ENCODE measurements at regions of chr14 and their contacts with region 1.

Region 1: GRCh38 chr14:68824517-68825347 is 31.9 kb upstream of the ZFP36L1 start:
- DNase-seq: peak in 3 of 9 experiments; percentile 43 to 55 (median 48)
- ATAC-seq: no peak
- H3K4me3 ChIP-seq: no peak overlapping the region
- H3K4me3 Mint-ChIP-seq: no peak overlapping the region
- H3K27ac ChIP-seq: no peak overlapping the region
- H3K27ac Mint-ChIP-seq: no peak overlapping the region
- H3K4me1 ChIP-seq: peaks cover 23% of the 10 kb centered on the region
- H3K4me1 Mint-ChIP-seq: peaks cover 33% of the 10 kb centered on the region
- H3K27me3 ChIP-seq: no peaks in the 10 kb centered on the region
- H3K27me3 Mint-ChIP-seq: no peaks in the 10 kb centered on the region
- CTCF ChIP-seq: peak; percentile 52

Region 2: GRCh38 chr14:67934008-67934481 is 890.7 kb before region 1 on chr14:
- CTCF ChIA-PET with region 1: interaction called, 40 read pairs
- POLR2A ChIA-PET with region 1: interaction called, 4 read pairs
- intact Hi-C with region 1: no loop called
- DNase-seq: peak in 2 of 9 experiments; percentile 48 to 67
- ATAC-seq: peak; percentile 57
- H3K4me3 ChIP-seq: no peak overlapping the region
- H3K4me3 Mint-ChIP-seq: no peak overlapping the region
- H3K27ac ChIP-seq: no peak overlapping the region
- H3K27ac Mint-ChIP-seq: no peak overlapping the region
- H3K4me1 ChIP-seq: peaks cover 5% of the 10 kb centered on the region
- H3K4me1 Mint-ChIP-seq: peaks cover 7% of the 10 kb centered on the region
- H3K27me3 ChIP-seq: no peaks in the 10 kb centered on the region
- H3K27me3 Mint-ChIP-seq: no peaks in the 10 kb centered on the region
- CTCF ChIP-seq: peak; percentile 63

Region 3: GRCh38 chr14:68577827-68578541 is 246.7 kb before region 1 on chr14:
- CTCF ChIA-PET with region 1: no interaction called
- POLR2A ChIA-PET with region 1: no interaction called
- intact Hi-C with region 1: no loop called
- DNase-seq: peak in 1 of 9 experiments; percentile 26
- ATAC-seq: no peak
- H3K4me3 ChIP-seq: no peak overlapping the region
- H3K4me3 Mint-ChIP-seq: no peak overlapping the region
- H3K27ac ChIP-seq: no peak overlapping the region
- H3K27ac Mint-ChIP-seq: no peak overlapping the region
- H3K4me1 ChIP-seq: no peaks in the 10 kb centered on the region
- H3K4me1 Mint-ChIP-seq: no peaks in the 10 kb centered on the region
- H3K27me3 ChIP-seq: no peaks in the 10 kb centered on the region
- H3K27me3 Mint-ChIP-seq: no peaks in the 10 kb centered on the region
- CTCF ChIP-seq: no peak

Region 4: GRCh38 chr14:68987653-68988036 is 162.9 kb after region 1 on chr14:
- CTCF ChIA-PET with region 1: no interaction called
- POLR2A ChIA-PET with region 1: no interaction called
- intact Hi-C with region 1: no loop called
- DNase-seq: no peak
- ATAC-seq: no peak
- H3K4me3 ChIP-seq: no peak overlapping the region
- H3K4me3 Mint-ChIP-seq: no peak overlapping the region
- H3K27ac ChIP-seq: no peak overlapping the region
- H3K27ac Mint-ChIP-seq: no peak overlapping the region
- H3K4me1 ChIP-seq: no peaks in the 10 kb centered on the region
- H3K4me1 Mint-ChIP-seq: peaks cover 11% of the 10 kb centered on the region
- H3K27me3 ChIP-seq: no peaks in the 10 kb centered on the region
- H3K27me3 Mint-ChIP-seq: no peaks in the 10 kb centered on the region
- CTCF ChIP-seq: no peak